B cell (primary cell): ENCODE measurements at regions of chr12 and their contacts with region 1.

Region 1: GRCh38 chr12:93569656-93570551 is 2.6 kb upstream of the SOCS2 start:
- DNase-seq: peak; percentile 83
- ATAC-seq: peak; percentile 51
- H3K4me3 ChIP-seq: peak overlapping the region; percentile 63 to 89 (median 67)
- H3K4me3 Mint-ChIP-seq: peak overlapping the region; percentile 88
- H3K27ac ChIP-seq: no peak overlapping the region
- H3K27ac Mint-ChIP-seq: peak overlapping the region; percentile 47
- H3K4me1 ChIP-seq: peaks cover 26 to 33% of the 10 kb centered on the region in 2 donors
- H3K4me1 Mint-ChIP-seq: peaks cover 21% of the 10 kb centered on the region
- H3K27me3 ChIP-seq: peaks cover 0 to 43% (median 30%) of the 10 kb centered on the region in 4 experiments
- H3K27me3 Mint-ChIP-seq: peaks cover 44% of the 10 kb centered on the region
- CTCF ChIP-seq: peak; percentile 71

Region 2: DNA sequence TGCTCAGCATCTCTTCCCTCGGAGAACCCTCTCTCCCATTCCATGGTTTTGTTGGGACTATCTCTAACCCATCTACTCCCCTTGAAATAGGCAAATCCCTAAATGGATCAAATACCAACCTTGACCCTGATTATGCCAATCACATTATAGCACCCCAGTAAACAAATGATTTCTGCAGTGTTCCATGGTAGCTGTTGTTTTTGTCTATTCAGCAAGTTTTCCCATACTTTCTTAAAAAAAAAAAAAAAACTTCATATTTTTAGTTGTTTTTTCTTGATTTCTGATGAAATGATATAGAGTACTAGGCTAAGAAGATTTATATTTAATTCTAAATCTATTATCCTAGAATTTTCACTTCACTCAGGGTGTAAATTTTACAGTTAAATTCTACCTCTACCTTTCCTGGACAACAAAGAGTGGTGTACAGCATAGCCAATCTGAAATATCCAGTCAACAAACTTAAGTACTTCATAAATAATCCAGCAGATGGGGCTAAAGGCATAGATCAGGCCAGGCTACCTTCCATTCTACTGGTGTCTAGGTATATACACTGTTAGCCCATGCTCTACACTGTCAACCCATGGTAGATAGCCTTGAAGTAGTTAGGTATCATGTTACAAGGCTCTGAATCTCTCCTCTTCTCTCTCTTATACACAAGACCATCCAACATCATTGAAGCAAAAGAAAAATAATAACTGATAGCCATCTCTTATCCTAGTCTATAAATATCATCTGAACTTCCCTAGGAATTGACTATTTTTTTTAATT is 784.9 kb before region 1 on chr12:
- CTCF ChIA-PET with region 1: interaction called, 4 read pairs
- POLR2A ChIA-PET with region 1: no interaction called
- intact Hi-C with region 1: loop called (anchors 1 kb)
- DNase-seq: peak; percentile 75
- ATAC-seq: peak; percentile 98
- H3K4me3 ChIP-seq: no peak overlapping the region
- H3K4me3 Mint-ChIP-seq: no peak overlapping the region
- H3K27ac ChIP-seq: no peak overlapping the region
- H3K27ac Mint-ChIP-seq: no peak overlapping the region
- H3K4me1 ChIP-seq: no peaks in the 10 kb centered on the region
- H3K4me1 Mint-ChIP-seq: no peaks in the 10 kb centered on the region
- H3K27me3 ChIP-seq: no peaks in the 10 kb centered on the region
- H3K27me3 Mint-ChIP-seq: no peaks in the 10 kb centered on the region
- CTCF ChIP-seq: peak; percentile 81

Region 3: DNA sequence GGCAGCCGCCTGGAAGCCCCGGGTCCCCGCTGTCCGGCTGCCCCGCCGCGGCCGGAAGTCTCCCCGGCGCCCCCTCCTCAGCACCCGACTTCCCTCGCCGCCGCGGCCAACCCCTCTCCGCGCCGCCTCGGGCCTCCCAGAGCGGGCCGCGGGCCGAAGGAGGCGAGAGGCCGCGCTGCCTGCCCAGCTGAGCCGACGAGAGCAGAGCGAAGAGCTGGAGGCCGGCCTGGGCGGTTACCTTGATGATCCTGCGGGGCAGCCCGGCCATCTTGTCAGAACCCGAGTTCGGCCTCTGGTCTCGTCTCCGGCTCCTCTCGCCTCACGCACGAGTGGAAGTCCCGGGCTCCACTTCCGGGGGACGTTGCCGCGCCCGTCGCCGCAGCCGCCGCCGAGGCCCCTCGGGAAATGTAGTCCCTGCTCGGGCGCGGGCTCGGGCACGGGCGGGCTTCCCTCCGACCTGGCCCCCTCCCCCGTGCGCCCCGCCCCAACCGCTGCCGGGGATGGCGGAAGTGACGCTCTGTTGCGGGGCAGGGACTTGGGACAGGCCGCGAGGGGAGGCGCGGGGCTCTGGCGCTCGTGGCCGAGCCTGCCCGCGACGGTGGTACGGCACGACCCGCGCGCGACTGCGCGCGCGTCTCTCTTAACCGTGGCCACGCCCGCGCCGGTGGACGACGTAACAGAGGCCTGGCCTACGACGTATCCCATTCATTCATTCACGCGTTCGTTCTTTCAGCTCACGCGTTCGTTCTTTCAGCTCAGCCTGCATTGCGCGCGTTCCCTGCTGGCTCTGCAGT is 128.1 kb before region 1 on chr12 and contains the start of gene UBE2N:
- CTCF ChIA-PET with region 1: no interaction called
- POLR2A ChIA-PET with region 1: no interaction called
- intact Hi-C with region 1: loop called (anchors 5 kb)
- DNase-seq: peak; percentile 97
- ATAC-seq: peak; percentile 85
- H3K4me3 ChIP-seq: peak within 1 kb of the TSS; percentile 65 to 92 (median 84)
- H3K4me3 Mint-ChIP-seq: peak within 1 kb of the TSS; percentile 94
- H3K27ac ChIP-seq: peak within 1 kb of the TSS; percentile 88 to 97
- H3K27ac Mint-ChIP-seq: peak within 1 kb of the TSS; percentile 96
- H3K4me1 ChIP-seq: peaks cover 41 to 46% of the 10 kb centered on the region in 2 donors
- H3K4me1 Mint-ChIP-seq: peaks cover 48% of the 10 kb centered on the region
- H3K27me3 ChIP-seq: no peaks in the 10 kb centered on the region
- H3K27me3 Mint-ChIP-seq: no peaks in the 10 kb centered on the region
- CTCF ChIP-seq: no peak
- total RNA-seq, gene UBE2N: 81.7 and 83.8 TPM in 2 replicates

Region 4: DNA sequence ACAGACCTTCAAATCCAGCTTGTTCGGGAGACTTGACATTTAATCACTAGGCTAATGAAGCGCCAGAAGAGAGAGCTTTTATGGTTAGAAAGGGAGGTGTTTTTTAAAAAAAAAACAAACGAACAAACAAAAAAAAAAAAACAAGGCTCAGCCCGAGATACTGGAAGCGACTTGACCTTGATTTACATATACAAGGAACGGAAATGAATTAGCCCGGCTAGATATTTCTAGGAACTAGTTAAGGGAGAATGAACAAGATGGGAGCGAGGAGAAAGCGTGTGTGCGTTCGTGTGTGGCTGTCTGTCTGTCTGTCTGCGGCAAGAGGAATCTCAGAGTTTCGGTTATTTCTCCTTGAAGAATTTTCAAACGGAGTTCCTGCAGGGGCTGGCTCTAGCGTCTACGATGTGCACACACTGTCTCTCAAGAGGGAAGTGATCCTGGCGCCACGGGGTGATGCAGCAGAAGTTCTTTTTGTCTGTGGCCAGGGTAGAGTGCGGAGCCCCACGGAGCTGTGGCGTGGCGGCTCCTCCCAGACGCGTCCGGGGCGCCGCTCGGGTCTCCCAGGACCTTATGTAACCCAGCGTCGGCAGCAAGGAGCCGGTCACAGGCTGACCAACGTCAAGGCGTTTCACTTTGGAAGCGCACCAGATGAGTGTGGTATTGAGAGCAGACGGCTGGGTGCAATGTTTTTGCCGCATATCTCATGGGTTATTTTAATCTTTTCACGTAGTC is 21.4 kb after region 1 on chr12:
- CTCF ChIA-PET with region 1: interaction called, 6 read pairs
- POLR2A ChIA-PET with region 1: no interaction called
- intact Hi-C with region 1: loop called (anchors 2 kb)
- DNase-seq: peak; percentile 78
- ATAC-seq: peak; percentile 94
- H3K4me3 ChIP-seq: peak overlapping the region; percentile 29 to 74 (median 46)
- H3K4me3 Mint-ChIP-seq: peak overlapping the region; percentile 91
- H3K27ac ChIP-seq: no peak overlapping the region
- H3K27ac Mint-ChIP-seq: no peak overlapping the region
- H3K4me1 ChIP-seq: peaks cover 14 to 17% of the 10 kb centered on the region in 2 donors
- H3K4me1 Mint-ChIP-seq: peaks cover 14% of the 10 kb centered on the region
- H3K27me3 ChIP-seq: peaks cover 0 to 58% (median 44%) of the 10 kb centered on the region in 4 experiments
- H3K27me3 Mint-ChIP-seq: peaks cover 59% of the 10 kb centered on the region
- CTCF ChIP-seq: no peak

Region 5: DNA sequence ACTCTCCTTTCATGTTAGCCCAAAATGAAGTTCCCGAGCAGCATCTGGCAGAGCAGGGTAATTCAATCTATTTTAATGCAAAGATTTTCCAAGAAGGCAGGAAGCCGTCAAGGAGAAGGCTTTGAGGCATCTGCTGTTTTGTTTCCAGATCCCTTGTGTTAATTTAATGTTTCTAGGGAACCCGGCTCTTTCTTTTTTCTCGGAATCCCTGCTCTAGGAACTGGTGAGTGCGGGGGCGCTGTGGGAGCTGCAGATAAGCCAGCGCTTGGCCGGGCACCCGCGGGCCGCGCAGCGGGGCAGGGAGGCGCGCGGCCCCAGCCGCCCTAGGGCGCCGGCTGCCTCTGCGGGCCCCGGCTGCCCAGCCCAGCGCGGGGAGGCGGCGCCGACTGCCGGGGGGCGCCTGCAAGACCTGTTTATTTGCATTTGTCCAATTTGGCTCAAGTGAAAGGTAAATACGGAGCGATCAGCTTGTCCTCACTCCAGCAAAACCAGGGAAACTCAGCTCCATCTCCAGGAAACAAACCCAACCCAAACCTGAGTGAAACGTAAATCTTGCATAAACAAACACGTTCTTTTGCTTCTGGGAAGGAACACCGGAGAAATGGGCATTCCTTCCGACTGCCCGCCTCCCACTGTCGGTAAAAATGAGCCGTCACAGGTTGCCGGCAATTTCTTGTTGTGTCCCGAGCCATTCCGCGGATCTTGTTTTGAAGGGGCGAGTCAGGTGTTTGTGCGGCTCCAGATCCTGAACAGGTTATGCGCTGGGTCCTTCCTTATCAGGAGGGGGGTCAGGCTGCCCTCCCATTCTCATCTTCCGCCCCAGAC is 172.4 kb after region 1 on chr12:
- CTCF ChIA-PET with region 1: interaction called, 3 read pairs
- POLR2A ChIA-PET with region 1: no interaction called
- intact Hi-C with region 1: loop called (anchors 1 kb)
- DNase-seq: peak; percentile 73
- ATAC-seq: peak; percentile 94
- H3K4me3 ChIP-seq: peak overlapping the region; percentile 59 to 93 (median 86)
- H3K4me3 Mint-ChIP-seq: peak overlapping the region; percentile 92
- H3K27ac ChIP-seq: peak overlapping the region; percentile 48 to 68
- H3K27ac Mint-ChIP-seq: peak overlapping the region; percentile 78
- H3K4me1 ChIP-seq: peaks cover 8 to 15% of the 10 kb centered on the region in 2 donors
- H3K4me1 Mint-ChIP-seq: peaks cover 29% of the 10 kb centered on the region
- H3K27me3 ChIP-seq: no peaks in the 10 kb centered on the region
- H3K27me3 Mint-ChIP-seq: no peaks in the 10 kb centered on the region
- CTCF ChIP-seq: peak; percentile 26